ENCODE measurements at regions of chr11 and their contacts with region 1.

Region 1: DNA sequence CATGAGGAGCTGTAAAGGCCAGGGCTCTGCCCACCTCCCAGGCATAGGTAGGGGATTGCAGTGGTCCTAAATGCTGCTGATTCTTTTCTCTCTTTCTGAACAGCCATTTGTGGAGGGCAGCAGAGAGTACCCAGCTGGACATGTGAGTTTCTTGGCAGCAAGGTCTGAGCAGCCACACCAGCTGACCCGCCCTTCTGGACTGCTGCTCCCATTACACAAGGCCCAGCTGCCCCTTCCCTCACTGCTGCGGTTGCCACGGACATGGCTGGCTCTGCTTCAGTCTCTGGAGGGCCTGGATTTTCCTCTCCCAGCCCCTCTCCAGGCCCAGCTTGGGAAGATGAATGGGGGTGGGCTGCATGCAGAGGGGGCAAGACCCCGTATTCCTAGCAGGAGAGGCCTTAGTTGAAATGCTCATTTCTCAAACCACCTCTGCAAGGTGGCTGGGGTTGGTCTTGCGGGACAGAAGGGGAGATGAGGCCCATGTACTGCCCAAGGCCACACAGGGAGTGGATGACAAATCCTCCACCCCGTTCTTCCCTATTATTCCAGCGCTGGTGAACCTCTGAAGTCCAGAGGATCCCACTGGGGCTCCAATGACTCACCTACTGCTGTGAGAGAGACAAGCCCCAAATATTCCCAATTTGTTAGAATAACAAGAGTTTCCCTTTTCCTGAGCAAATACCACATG is 4.6 kb downstream of the LGALS12 start:
- DNase-seq: no peak
- ATAC-seq: no peak
- H3K4me3 ChIP-seq: no peak overlapping the region
- H3K4me3 Mint-ChIP-seq: no peak overlapping the region
- H3K27ac ChIP-seq: no peak overlapping the region
- H3K27ac Mint-ChIP-seq: no peak overlapping the region
- H3K4me1 ChIP-seq: peaks cover 0 to 7% of the 10 kb centered on the region in 2 experiments
- H3K4me1 Mint-ChIP-seq: peaks cover 0 to 11% (median 8%) of the 10 kb centered on the region in 3 donors
- H3K27me3 ChIP-seq: peaks cover 0 to 5% of the 10 kb centered on the region in 2 experiments
- H3K27me3 Mint-ChIP-seq: no peaks in the 10 kb centered on the region

Region 2: DNA sequence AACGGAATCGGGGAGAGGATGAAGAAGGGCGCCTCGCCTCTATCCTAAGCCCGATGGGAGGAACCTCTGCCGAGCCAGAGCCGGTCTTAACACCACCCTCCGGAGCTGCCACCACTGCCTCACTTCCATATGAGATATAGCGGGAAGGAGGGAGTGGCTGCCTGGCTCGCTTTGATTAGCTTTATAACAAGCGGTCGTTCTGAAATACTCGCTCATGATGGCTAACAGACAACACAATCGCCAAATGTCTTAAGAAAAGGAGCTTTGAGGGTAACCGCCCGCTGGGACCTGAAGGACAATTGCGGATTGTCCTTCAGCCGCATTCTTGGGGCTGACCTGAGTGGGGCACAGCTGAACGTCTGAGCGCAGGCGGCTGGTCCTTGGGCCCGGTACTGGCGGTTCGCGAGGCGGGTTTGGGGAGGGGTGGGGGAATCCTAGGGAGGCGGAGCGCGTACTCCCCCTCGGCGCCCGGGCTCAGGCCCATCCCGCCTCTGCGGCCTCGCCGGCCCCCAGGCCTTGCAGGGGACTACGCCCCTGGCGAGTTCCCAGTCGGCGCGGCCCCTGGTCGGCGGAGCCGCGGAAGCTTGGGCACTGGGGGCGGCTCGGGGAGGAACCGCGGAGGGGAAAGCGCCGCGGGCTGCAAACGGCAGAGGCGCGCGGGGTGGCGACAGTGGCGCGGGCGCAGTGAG is 19.8 kb before region 1 on chr11 and contains the start of gene PLAAT5:
- CTCF ChIA-PET with region 1: no interaction called
- POLR2A ChIA-PET with region 1: no interaction called
- DNase-seq: peak in 18 of 35 experiments; percentile 5 to 38 (median 18)
- ATAC-seq: peak in 3 of 4 experiments; percentile 43 to 79 (median 72)
- H3K4me3 ChIP-seq: peak within 1 kb of the TSS; percentile 33 to 57
- H3K4me3 Mint-ChIP-seq: peak within 1 kb of the TSS; percentile 78 to 82 (median 78)
- H3K27ac ChIP-seq: no peak within 1 kb of the TSS
- H3K27ac Mint-ChIP-seq: peak within 1 kb of the TSS in 1 of 2 donors; percentile 35
- H3K4me1 ChIP-seq: peaks cover 3 to 9% of the 10 kb centered on the region in 2 experiments
- H3K4me1 Mint-ChIP-seq: peaks cover 11 to 18% (median 15%) of the 10 kb centered on the region in 3 donors
- H3K27me3 ChIP-seq: peaks cover 0 to 10% of the 10 kb centered on the region in 2 experiments
- H3K27me3 Mint-ChIP-seq: peaks cover 9 to 24% of the 10 kb centered on the region in 2 donors
- total RNA-seq, gene PLAAT5: 0.16 to 0.32 (median 0.23) TPM in 3 of 5 donors, not detected in the others

Region 3: GRCh38 chr11:63520606-63521170 is 10.2 kb after region 1 on chr11:
- CTCF ChIA-PET with region 1: no interaction called
- POLR2A ChIA-PET with region 1: no interaction called
- DNase-seq: no peak
- ATAC-seq: no peak
- H3K4me3 ChIP-seq: no peak overlapping the region
- H3K4me3 Mint-ChIP-seq: no peak overlapping the region
- H3K27ac ChIP-seq: no peak overlapping the region
- H3K27ac Mint-ChIP-seq: no peak overlapping the region
- H3K4me1 ChIP-seq: peaks cover 0 to 8% of the 10 kb centered on the region in 2 experiments
- H3K4me1 Mint-ChIP-seq: peaks cover 13 to 28% (median 18%) of the 10 kb centered on the region in 3 donors
- H3K27me3 ChIP-seq: no peaks in the 10 kb centered on the region
- H3K27me3 Mint-ChIP-seq: no peaks in the 10 kb centered on the region

Region 4: DNA sequence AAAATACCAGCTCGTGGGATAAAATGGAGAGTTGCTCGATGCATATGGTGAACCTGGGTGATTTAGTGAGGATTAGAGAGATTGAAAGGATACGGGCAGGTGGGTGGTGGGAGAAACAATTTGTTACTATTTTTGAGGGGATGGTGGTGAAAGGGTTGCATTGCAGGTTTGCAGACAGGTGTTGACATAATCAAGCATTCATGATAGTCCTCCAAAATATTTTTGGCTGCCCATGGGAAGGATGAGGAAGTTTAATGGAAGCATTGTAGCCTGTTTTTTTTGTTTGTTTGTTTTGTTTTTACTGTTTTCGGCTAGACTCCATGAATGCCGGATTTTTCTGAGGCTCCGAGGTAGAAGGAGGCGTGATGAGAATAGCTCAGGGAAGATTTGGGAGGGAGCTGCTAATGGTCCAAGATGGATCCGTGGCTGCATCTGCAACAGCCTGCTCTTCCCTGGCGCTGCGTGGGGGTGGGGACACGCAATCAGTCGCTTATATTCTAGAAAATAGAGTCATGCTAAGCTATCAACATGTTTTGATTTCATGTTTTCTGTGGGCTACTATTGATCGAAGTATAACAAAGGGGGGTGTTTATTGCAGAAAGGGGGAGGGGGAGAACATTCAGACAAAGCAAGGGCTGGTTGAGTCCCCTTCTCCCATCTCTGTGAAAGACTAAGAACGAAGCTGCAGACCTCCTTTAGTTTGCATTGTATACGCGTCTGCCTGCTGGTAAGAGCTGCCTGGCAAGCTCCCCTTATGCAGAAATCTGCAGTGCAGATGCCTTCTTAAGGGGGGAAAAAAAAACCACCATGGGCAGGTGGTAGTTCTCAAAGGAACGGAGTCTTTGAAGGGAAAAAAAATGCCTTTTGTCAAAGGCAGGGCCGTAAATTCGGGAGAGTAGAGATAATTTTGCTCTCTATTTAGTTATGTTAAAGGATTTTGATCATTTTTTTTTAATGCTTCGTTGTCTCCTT is 171.8 kb after region 1 on chr11:
- CTCF ChIA-PET with region 1: no interaction called
- POLR2A ChIA-PET with region 1: interaction called in 1 of 2 experiments, 11 read pairs
- DNase-seq: peak in 6 of 35 experiments; percentile 5 to 60 (median 18)
- ATAC-seq: peak in 2 of 4 experiments; percentile 20 to 28
- H3K4me3 ChIP-seq: peak overlapping the region; percentile 82 to 89
- H3K4me3 Mint-ChIP-seq: peak overlapping the region; percentile 86 to 88 (median 88)
- H3K27ac ChIP-seq: peak overlapping the region; percentile 74
- H3K27ac Mint-ChIP-seq: peak overlapping the region; percentile 91
- H3K4me1 ChIP-seq: peaks cover 18 to 20% of the 10 kb centered on the region in 2 experiments
- H3K4me1 Mint-ChIP-seq: peaks cover 30 to 37% (median 31%) of the 10 kb centered on the region in 3 donors
- H3K27me3 ChIP-seq: no peaks in the 10 kb centered on the region
- H3K27me3 Mint-ChIP-seq: no peaks in the 10 kb centered on the region

Measured in T-cell (primary cell).